Heart right ventricle (tissue), 16 donors: ENCODE measurements at regions of chr5 and their contacts with region 1.

Region 1: GRCh38 chr5:63894690-63895089 is 67.6 kb downstream of the HTR1A start:
- DNase-seq: no peak
- ATAC-seq: no peak
- H3K4me3 ChIP-seq: no peak overlapping the region
- H3K27ac ChIP-seq: no peak overlapping the region
- H3K4me1 ChIP-seq: no peaks in the 10 kb centered on the region
- H3K27me3 ChIP-seq: no peaks in the 10 kb centered on the region
- CTCF ChIP-seq: no peak

Region 2: GRCh38 chr5:64108675-64109074 is 214.0 kb after region 1 on chr5:
- intact Hi-C with region 1: loop called in 1 of 10 experiments (anchors 5 kb)
- DNase-seq: no peak
- ATAC-seq: no peak
- H3K4me3 ChIP-seq: no peak overlapping the region
- H3K27ac ChIP-seq: no peak overlapping the region
- H3K4me1 ChIP-seq: no peaks in the 10 kb centered on the region
- H3K27me3 ChIP-seq: no peaks in the 10 kb centered on the region
- CTCF ChIP-seq: no peak